ENCODE measurements at regions of chr18 and their contacts with region 1.

Region 1: GRCh38 chr18:46917108-46917802 is at the starts of genes KATNAL2 and PIAS2:
- DNase-seq: peak; percentile 87
- H3K4me3 ChIP-seq: peak within 1 kb of the TSS; percentile 61 to 90 (median 86)
- H3K27ac ChIP-seq: peak within 1 kb of the TSS; percentile 87 to 91 (median 89)
- H3K4me1 ChIP-seq: peaks cover 0 to 28% (median 18%) of the 10 kb centered on the region in 4 donors
- H3K27me3 ChIP-seq: no peaks in the 10 kb centered on the region
- CTCF ChIP-seq: no peak
- EP300 ChIP-seq: no peak
- POLR2A ChIP-seq: peak; percentile 32 to 44
- total RNA-seq, gene KATNAL2: 1.2 to 18.8 (median 7.0) TPM
- total RNA-seq, gene PIAS2: 30.0 to 36.6 (median 31.8) TPM

Region 2: DNA sequence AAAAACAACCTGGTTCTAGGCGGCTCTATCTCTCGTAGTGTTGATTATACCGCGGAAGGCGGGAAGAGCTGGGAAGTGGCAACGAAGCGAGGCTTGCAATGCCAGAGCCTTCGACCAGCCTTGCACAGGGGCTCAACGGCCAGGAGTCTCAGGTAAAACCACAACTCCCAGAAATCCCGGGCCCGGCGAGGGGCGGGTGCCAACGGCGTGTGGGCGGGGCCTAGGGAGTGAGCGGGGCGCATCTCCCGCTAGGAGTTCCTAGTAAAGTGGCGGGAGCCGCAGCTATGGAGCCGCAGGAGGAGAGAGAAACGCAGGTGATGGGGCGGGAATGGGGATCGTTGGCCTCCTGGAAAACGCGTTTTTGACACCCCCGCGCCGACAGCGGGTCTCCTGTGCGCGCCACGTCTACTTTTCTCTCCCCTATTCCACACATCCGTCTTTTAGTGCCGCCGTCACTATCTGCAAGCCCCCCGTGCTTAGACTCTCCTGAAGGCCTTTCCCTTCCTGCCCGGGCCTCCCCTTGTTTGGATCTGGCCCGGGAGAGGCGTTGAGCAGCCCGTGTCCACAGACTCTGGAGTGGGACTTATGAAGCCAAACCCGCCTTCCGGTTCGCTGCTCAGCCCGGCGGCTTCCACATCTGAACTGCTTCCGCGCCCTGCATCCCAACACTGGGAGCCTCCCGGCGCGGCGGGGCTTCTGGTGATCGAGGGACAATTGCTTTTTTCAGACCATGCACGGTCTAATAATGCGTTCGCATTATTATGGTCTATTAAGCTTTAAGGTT is 812.9 kb before region 1 on chr18 and contains the start of gene HAUS1:
- intact Hi-C with region 1: loop called (anchors 10 kb)
- DNase-seq: peak; percentile 96
- H3K4me3 ChIP-seq: peak within 1 kb of the TSS; percentile 51 to 84 (median 77)
- H3K27ac ChIP-seq: peak within 1 kb of the TSS; percentile 85 to 91 (median 91)
- H3K4me1 ChIP-seq: peaks cover 0 to 16% (median 10%) of the 10 kb centered on the region in 4 donors
- H3K27me3 ChIP-seq: no peaks in the 10 kb centered on the region
- CTCF ChIP-seq: no peak
- EP300 ChIP-seq: no peak
- POLR2A ChIP-seq: peak; percentile 49 to 56
- total RNA-seq, gene HAUS1: 24.2 to 62.1 (median 43.5) TPM